A673 (cell line): ENCODE measurements at regions of chr1 and their contacts with region 1.

Region 1: DNA sequence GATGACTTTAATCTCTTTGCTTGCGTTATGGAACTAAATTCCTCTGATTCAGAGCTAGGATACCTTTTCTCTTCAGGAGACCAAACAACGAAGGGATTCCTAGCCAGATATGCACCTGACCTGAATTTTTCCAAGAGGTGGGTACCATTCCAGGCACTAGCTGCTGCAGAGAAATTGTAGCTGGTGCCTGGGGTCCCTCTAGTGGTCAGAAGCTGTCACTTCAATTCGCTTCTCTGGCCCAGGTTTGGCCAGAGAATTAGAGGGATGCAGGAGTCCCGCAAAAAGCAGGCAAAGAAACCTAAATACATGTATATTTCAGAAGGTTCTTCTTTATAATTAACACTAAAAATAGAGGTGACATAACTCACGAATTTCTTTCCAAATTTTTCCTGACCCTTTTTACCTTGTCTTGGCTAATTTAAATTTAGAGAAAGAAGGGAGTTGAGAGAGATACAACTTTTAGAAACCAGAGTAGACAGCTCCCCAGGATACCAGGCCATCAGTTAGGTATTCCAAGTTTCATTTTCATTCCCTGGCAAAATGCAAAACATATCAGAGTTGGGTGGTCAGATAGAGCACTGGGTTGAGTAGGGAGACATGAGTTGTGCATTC is 9.6 kb downstream of the ACKR1 start:
- DNase-seq: peak; percentile 49
- H3K4me3 ChIP-seq: no peak overlapping the region
- H3K27ac ChIP-seq: no peak overlapping the region
- H3K4me1 ChIP-seq: no peaks in the 10 kb centered on the region
- H3K27me3 ChIP-seq: peaks cover 51% of the 10 kb centered on the region
- CTCF ChIP-seq: peak; percentile 88

Region 2: GRCh38 chr1:159132271-159132881 is 81.9 kb before region 1 on chr1:
- CTCF ChIA-PET with region 1: interaction called, 4 read pairs
- POLR2A ChIA-PET with region 1: no interaction called
- intact Hi-C with region 1: loop called (anchors 2 kb)
- DNase-seq: peak; percentile 73
- H3K4me3 ChIP-seq: no peak overlapping the region
- H3K27ac ChIP-seq: no peak overlapping the region
- H3K4me1 ChIP-seq: no peaks in the 10 kb centered on the region
- H3K27me3 ChIP-seq: peaks cover 61% of the 10 kb centered on the region
- CTCF ChIP-seq: peak; percentile 93

Region 3: DNA sequence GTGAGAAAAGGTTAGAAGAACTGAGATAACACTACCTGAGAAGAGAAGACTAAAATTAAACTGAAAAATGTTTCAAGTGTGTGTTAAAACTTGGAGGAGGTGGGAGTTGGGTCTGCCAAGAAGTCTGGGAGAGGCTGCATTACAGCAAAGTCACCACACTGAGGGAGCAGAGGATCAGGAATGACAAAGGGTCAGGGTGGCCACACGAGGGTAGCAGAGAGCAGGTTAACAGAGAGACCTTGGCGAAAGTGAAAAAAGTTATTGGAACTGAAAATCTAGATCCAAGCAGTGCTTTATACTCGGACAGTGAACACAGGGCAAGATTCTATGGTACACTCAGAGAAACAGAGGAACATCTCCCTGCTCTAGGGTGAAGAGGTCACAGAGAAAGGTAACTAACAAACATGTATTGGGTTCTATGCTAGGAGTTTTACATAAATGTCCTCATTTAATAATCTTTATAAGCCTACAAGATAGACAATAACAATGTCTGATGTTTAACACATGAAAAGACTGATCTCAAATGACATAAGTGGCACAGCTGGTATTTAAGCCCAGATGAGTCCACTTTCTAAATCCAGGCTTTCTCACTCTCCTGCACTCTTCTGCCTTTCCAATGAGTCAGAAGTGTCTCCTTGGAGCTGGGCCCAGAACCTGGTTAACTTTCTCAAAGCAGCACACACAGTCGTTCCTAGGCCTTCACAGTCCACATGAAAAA is 53.1 kb before region 1 on chr1:
- CTCF ChIA-PET with region 1: no interaction called
- POLR2A ChIA-PET with region 1: no interaction called
- intact Hi-C with region 1: loop called (anchors 1 kb)
- DNase-seq: peak; percentile 73
- H3K4me3 ChIP-seq: no peak overlapping the region
- H3K27ac ChIP-seq: no peak overlapping the region
- H3K4me1 ChIP-seq: no peaks in the 10 kb centered on the region
- H3K27me3 ChIP-seq: peaks cover 78% of the 10 kb centered on the region
- CTCF ChIP-seq: peak; percentile 95

Region 4: DNA sequence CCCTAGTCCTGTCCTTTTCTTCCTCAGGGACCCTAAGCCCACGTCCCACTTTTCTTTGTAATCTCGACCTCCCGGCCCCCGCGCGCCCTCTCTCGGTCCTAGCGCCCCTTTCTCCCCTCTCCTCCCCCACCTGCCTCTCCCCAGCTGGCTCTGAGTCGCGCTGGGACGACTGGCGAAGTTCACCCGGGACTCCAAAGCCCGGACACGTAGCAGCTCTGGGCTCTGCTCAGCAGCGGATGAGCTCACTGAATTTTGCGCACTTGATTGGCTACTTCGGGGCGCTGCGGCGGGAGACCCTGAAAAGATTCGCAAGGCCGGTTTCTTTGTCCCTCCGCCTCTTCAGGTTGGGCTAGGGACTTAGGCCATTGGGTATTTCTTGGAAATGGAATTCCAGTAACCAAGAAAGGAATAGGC is 25.9 kb before region 1 on chr1:
- CTCF ChIA-PET with region 1: no interaction called
- POLR2A ChIA-PET with region 1: no interaction called
- intact Hi-C with region 1: no loop called
- DNase-seq: peak; percentile 29
- H3K4me3 ChIP-seq: no peak overlapping the region
- H3K27ac ChIP-seq: no peak overlapping the region
- H3K4me1 ChIP-seq: no peaks in the 10 kb centered on the region
- H3K27me3 ChIP-seq: peaks cover 92% of the 10 kb centered on the region
- CTCF ChIP-seq: no peak

Region 5: DNA sequence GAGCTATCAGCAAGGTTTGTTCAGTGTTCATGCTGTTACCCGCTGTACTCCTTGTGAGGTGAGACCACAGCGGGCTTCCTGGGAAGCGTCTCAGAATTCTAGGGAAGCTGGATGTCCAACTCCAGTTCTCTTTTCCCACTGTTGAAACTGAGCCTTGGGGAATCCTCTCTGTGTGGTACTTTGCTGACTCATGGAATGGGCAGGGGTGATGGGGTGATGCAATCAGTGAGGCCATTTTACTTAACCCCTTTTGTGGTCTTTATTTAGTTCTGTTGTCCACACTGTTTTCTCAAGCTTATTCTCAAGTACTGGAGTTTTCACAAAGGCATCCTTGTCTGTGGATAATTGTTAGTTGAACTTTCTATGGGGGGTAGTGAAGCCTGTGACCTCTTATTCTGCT is 33.0 kb after region 1 on chr1:
- CTCF ChIA-PET with region 1: no interaction called
- POLR2A ChIA-PET with region 1: no interaction called
- intact Hi-C with region 1: no loop called
- DNase-seq: no peak
- H3K4me3 ChIP-seq: no peak overlapping the region
- H3K27ac ChIP-seq: no peak overlapping the region
- H3K4me1 ChIP-seq: no peaks in the 10 kb centered on the region
- H3K27me3 ChIP-seq: peaks cover 22% of the 10 kb centered on the region
- CTCF ChIP-seq: no peak

Region 6: DNA sequence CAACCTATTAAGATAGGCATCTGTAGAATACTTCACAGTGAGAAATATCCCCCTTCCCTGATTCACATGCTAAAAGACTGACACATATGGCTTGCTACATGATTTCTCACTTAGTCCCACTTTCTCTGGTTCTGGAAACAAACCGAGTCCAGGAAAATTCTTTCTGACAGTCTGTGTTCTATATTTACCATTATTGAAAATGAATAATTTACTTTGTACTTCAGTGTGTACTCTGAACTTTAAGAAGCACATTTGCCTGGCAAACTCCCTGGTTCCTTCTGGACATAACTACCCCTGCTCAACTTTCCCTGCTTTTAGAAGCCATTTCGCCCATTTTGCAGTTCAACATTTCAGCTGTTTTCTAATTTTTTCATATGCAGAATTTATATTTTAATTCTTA is 427.0 kb after region 1 on chr1:
- CTCF ChIA-PET with region 1: no interaction called
- POLR2A ChIA-PET with region 1: no interaction called
- intact Hi-C with region 1: no loop called
- DNase-seq: no peak
- H3K4me3 ChIP-seq: no peak overlapping the region
- H3K27ac ChIP-seq: no peak overlapping the region
- H3K4me1 ChIP-seq: no peaks in the 10 kb centered on the region
- H3K27me3 ChIP-seq: peaks cover 30% of the 10 kb centered on the region
- CTCF ChIP-seq: no peak

Region 7: GRCh38 chr1:160046494-160047110 is 832.3 kb after region 1 on chr1:
- CTCF ChIA-PET with region 1: no interaction called
- POLR2A ChIA-PET with region 1: no interaction called
- intact Hi-C with region 1: no loop called
- DNase-seq: peak; percentile 58
- H3K4me3 ChIP-seq: no peak overlapping the region
- H3K27ac ChIP-seq: no peak overlapping the region
- H3K4me1 ChIP-seq: no peaks in the 10 kb centered on the region
- H3K27me3 ChIP-seq: peaks cover 6% of the 10 kb centered on the region
- CTCF ChIP-seq: peak; percentile 76